Activated B cell treated with CpG ODN at 0.5 μM for 24 hours (primary cell): ENCODE measurements at regions of chr3 and their contacts with region 1.

Region 1: DNA sequence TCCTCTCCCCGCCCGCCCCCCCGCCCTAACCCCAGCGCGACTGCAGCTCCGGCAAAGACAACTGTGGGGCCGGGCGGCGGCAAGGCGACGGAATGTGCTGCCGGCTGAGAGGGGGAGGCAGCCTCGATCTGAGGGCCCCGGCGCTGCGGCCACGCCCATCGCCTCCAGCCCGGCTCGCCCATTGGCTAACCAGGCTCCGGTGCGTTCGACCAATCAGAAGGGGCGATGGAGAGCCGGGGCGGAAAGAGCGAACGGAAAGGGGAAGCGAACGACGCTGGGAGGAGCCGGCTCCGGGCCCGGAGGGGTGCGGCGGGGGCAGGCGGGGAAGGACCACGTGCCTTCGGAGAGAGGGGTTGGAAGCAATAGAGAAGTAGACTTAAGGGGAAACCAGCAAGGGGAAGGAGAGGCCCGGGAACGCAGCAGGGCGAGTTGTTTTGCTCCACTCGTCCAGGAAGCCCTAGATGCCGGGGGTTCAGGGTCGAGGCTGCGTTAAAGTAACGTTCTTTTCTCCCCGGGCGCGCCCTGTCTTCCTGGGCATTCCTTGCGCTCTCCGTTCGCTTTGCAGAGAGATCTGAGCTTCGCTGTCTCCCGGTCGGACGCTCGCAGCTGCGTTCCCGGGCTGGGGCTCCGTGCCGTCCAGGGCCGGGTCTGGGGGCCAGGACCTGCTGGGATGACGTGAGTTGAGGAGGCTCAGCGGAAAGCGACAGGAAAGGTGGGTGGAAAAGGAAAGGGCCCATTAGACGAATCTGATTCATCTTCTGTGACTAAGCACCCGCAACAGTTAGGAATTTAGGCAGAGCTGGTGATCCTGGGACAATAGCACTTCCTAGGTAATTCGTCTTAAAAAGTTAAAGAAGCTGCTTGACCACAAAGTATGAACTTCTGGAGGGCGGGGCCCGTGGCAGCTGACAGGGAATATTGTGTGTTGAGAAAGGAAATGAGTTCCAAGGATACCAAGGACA is at the start of gene KPNA4:
- DNase-seq: peak; percentile 95
- ATAC-seq: peak; percentile 88
- H3K4me3 Mint-ChIP-seq: peak within 1 kb of the TSS; percentile 95
- H3K27ac Mint-ChIP-seq: peak within 1 kb of the TSS; percentile 94
- H3K4me1 Mint-ChIP-seq: peaks cover 53% of the 10 kb centered on the region
- H3K27me3 Mint-ChIP-seq: no peaks in the 10 kb centered on the region
- CTCF ChIP-seq: no peak
- total RNA-seq, gene KPNA4: 43.4 and 46.7 TPM in 2 replicates

Region 2: GRCh38 chr3:158801696-158802408 is 1763.9 kb before region 1 on chr3 and contains the start of gene MFSD1:
- CTCF ChIA-PET with region 1: no interaction called
- POLR2A ChIA-PET with region 1: no interaction called
- intact Hi-C with region 1: loop called (anchors 10 kb)
- DNase-seq: peak; percentile 82
- ATAC-seq: peak; percentile 89
- H3K4me3 Mint-ChIP-seq: peak within 1 kb of the TSS; percentile 94
- H3K27ac Mint-ChIP-seq: peak within 1 kb of the TSS; percentile 87
- H3K4me1 Mint-ChIP-seq: peaks cover 37% of the 10 kb centered on the region
- H3K27me3 Mint-ChIP-seq: no peaks in the 10 kb centered on the region
- CTCF ChIP-seq: no peak
- total RNA-seq, gene MFSD1: 36.8 and 41.6 TPM in 2 replicates

Region 3: GRCh38 chr3:160125258-160125657 is 440.5 kb before region 1 on chr3:
- CTCF ChIA-PET with region 1: no interaction called
- POLR2A ChIA-PET with region 1: no interaction called
- intact Hi-C with region 1: no loop called
- DNase-seq: no peak
- ATAC-seq: no peak
- H3K4me3 Mint-ChIP-seq: no peak overlapping the region
- H3K27ac Mint-ChIP-seq: no peak overlapping the region
- H3K4me1 Mint-ChIP-seq: peaks cover 12% of the 10 kb centered on the region
- H3K27me3 Mint-ChIP-seq: no peaks in the 10 kb centered on the region
- CTCF ChIP-seq: no peak

Region 4: GRCh38 chr3:160399125-160400029 is 166.3 kb before region 1 on chr3 and contains the starts of genes IFT80 and SMC4:
- CTCF ChIA-PET with region 1: no interaction called
- POLR2A ChIA-PET with region 1: interaction called, 3 read pairs
- intact Hi-C with region 1: loop called (anchors 1 kb)
- DNase-seq: peak; percentile 90
- ATAC-seq: peak; percentile 95
- H3K4me3 Mint-ChIP-seq: peak within 1 kb of the TSS; percentile 97
- H3K27ac Mint-ChIP-seq: peak within 1 kb of the TSS; percentile 99
- H3K4me1 Mint-ChIP-seq: peaks cover 47% of the 10 kb centered on the region
- H3K27me3 Mint-ChIP-seq: peaks cover 2% of the 10 kb centered on the region
- CTCF ChIP-seq: no peak
- total RNA-seq, gene IFT80: 20.8 and 26.7 TPM in 2 replicates
- total RNA-seq, gene SMC4: 35.2 and 40.4 TPM in 2 replicates

Region 5: GRCh38 chr3:160531311-160531710 is 34.4 kb before region 1 on chr3:
- CTCF ChIA-PET with region 1: no interaction called
- POLR2A ChIA-PET with region 1: no interaction called
- intact Hi-C with region 1: loop called (anchors 5 kb)
- DNase-seq: no peak
- ATAC-seq: no peak
- H3K4me3 Mint-ChIP-seq: no peak overlapping the region
- H3K27ac Mint-ChIP-seq: no peak overlapping the region
- H3K4me1 Mint-ChIP-seq: no peaks in the 10 kb centered on the region
- H3K27me3 Mint-ChIP-seq: no peaks in the 10 kb centered on the region
- CTCF ChIP-seq: no peak

Region 6: DNA sequence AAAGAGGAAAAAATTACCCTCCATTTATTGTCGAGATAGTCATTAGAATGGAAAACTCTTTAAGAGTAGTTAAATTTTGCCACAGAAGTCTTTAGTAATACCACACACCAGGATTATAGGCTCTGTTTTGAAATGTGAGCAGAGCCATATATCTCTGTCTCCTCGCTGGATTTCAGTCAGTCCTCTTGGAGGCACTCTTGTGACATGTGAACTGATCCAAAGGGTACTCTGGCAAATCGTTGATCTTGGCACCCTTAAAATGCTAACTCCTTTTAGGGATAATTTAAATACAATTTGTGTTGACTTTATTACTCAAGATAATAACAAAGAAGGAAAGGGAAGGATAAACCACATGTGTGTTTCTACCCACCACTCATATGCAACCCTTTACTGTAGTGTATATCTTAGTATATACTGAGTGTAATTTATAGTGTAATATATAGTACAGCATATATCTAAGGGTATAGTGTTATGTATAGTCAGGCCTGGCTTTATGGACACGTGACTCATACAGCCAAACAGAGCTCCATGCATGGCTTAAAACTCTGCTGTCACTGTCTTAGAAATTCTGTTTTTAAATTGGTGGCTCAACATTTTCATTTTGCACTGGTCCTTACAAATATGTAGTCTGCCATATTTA is 12.0 kb after region 1 on chr3:
- CTCF ChIA-PET with region 1: no interaction called
- POLR2A ChIA-PET with region 1: no interaction called
- intact Hi-C with region 1: no loop called
- DNase-seq: no peak
- ATAC-seq: no peak
- H3K4me3 Mint-ChIP-seq: no peak overlapping the region
- H3K27ac Mint-ChIP-seq: no peak overlapping the region
- H3K4me1 Mint-ChIP-seq: no peaks in the 10 kb centered on the region
- H3K27me3 Mint-ChIP-seq: peaks cover 9% of the 10 kb centered on the region
- CTCF ChIP-seq: no peak

Region 7: GRCh38 chr3:160754855-160755747 is 189.4 kb after region 1 on chr3:
- CTCF ChIA-PET with region 1: no interaction called
- POLR2A ChIA-PET with region 1: interaction called, 15 read pairs
- intact Hi-C with region 1: loop called (anchors 1 kb)
- DNase-seq: peak; percentile 79
- ATAC-seq: peak; percentile 85
- H3K4me3 Mint-ChIP-seq: peak overlapping the region; percentile 92
- H3K27ac Mint-ChIP-seq: peak overlapping the region; percentile 94
- H3K4me1 Mint-ChIP-seq: peaks cover 27% of the 10 kb centered on the region
- H3K27me3 Mint-ChIP-seq: peaks cover 12% of the 10 kb centered on the region
- CTCF ChIP-seq: no peak

Region 8: DNA sequence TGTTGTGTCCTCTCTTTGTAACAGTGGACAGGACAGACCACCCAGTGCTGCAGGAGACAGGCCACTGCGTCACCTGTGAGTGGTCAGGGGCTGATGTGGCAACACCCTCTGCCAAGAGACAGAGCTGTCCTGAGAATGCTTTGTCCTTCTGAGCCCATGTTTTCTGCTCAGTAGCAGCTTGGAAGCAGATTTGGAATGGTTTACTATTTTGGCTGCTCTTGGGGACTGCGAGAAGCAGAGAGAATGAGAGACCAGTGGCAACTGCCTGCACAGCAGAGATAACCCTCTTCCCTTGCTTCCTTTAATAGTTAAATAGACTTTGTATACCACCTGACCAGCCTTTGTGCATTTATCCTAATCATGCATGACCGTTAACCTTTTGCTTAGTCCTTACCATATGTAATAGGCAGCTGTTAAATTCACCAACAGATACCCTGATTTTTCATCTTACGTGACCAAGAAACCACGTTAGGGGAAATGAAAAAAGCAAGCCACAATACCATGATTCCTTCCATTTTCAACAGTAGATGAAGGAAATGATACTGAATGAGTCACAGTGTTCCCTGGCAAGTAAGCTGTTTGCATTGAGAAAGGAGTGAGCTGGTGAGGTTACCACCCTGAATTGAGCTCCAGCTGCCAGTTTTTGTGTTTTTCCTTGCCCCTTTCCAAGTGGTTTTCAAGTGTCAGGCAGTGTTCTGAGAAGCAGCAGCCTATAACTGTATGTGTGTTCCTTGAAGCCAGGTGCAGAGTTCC is 504.0 kb after region 1 on chr3:
- CTCF ChIA-PET with region 1: no interaction called
- POLR2A ChIA-PET with region 1: no interaction called
- intact Hi-C with region 1: loop called (anchors 2 kb)
- DNase-seq: no peak
- ATAC-seq: peak; percentile 91
- H3K4me3 Mint-ChIP-seq: peak overlapping the region; percentile 51
- H3K27ac Mint-ChIP-seq: peak overlapping the region; percentile 82
- H3K4me1 Mint-ChIP-seq: peaks cover 48% of the 10 kb centered on the region
- H3K27me3 Mint-ChIP-seq: no peaks in the 10 kb centered on the region
- CTCF ChIP-seq: no peak